T-cell (primary cell): ENCODE measurements at regions of chr14 and their contacts with region 1.

Region 1: DNA sequence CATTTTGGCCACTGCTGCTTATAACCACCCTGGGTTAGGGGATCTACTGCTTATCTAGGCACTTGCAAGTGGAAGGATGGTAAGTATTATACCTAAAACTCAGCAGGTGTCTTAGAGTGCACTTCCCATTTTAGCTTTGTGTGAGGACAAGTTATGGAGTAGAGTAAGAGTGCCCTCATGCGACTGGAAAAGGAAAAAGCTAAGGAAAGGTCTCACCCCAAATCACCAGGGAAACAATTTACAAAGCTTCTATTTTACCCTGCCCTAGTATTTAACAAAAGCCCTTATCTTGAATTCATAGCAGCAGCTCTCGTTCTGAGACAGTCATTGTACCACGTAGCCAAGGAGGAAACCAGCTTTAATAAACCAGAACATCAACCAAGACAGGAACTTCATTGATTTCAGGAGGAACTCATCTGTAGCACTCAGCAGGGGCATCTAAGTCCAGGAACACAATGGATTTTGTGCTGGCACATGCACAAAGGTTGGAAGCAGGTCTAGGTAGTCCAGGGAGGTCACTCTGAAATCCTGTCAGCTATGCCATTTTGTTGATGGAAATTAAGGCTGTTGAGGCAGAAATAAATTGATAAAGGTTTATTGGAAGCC is 2.9 kb downstream of the RDH12 start:
- DNase-seq: peak in 19 of 35 experiments; percentile 4 to 79 (median 15)
- ATAC-seq: peak; percentile 67 to 82 (median 80)
- H3K4me3 ChIP-seq: no peak overlapping the region
- H3K4me3 Mint-ChIP-seq: no peak overlapping the region
- H3K27ac ChIP-seq: no peak overlapping the region
- H3K27ac Mint-ChIP-seq: no peak overlapping the region
- H3K4me1 ChIP-seq: no peaks in the 10 kb centered on the region
- H3K4me1 Mint-ChIP-seq: no peaks in the 10 kb centered on the region
- H3K27me3 ChIP-seq: no peaks in the 10 kb centered on the region
- H3K27me3 Mint-ChIP-seq: peaks cover 5% of the 10 kb centered on the region in 2 donors

Region 2: GRCh38 chr14:67426983-67427606 is 277.5 kb before region 1 on chr14:
- CTCF ChIA-PET with region 1: interaction called, 11 to 25 read pairs
- POLR2A ChIA-PET with region 1: interaction called in 1 of 2 experiments, 3 read pairs
- DNase-seq: peak; percentile 53 to 86 (median 69)
- ATAC-seq: peak; percentile 86 to 91 (median 88)
- H3K4me3 ChIP-seq: no peak overlapping the region
- H3K4me3 Mint-ChIP-seq: no peak overlapping the region
- H3K27ac ChIP-seq: no peak overlapping the region
- H3K27ac Mint-ChIP-seq: no peak overlapping the region
- H3K4me1 ChIP-seq: peaks cover 0 to 8% of the 10 kb centered on the region in 2 experiments
- H3K4me1 Mint-ChIP-seq: peaks cover 0 to 1% (median 0%) of the 10 kb centered on the region in 3 donors
- H3K27me3 ChIP-seq: peaks cover 0 to 41% of the 10 kb centered on the region in 2 experiments
- H3K27me3 Mint-ChIP-seq: peaks cover 11 to 18% of the 10 kb centered on the region in 2 donors

Region 3: GRCh38 chr14:67583711-67584644 is 120.6 kb before region 1 on chr14:
- CTCF ChIA-PET with region 1: interaction called, 11 to 29 read pairs
- POLR2A ChIA-PET with region 1: no interaction called
- DNase-seq: peak in 11 of 35 experiments; percentile 10 to 63 (median 19)
- ATAC-seq: peak; percentile 52 to 73 (median 64)
- H3K4me3 ChIP-seq: no peak overlapping the region
- H3K4me3 Mint-ChIP-seq: no peak overlapping the region
- H3K27ac ChIP-seq: no peak overlapping the region
- H3K27ac Mint-ChIP-seq: no peak overlapping the region
- H3K4me1 ChIP-seq: no peaks in the 10 kb centered on the region
- H3K4me1 Mint-ChIP-seq: no peaks in the 10 kb centered on the region
- H3K27me3 ChIP-seq: no peaks in the 10 kb centered on the region
- H3K27me3 Mint-ChIP-seq: no peaks in the 10 kb centered on the region

Region 4: DNA sequence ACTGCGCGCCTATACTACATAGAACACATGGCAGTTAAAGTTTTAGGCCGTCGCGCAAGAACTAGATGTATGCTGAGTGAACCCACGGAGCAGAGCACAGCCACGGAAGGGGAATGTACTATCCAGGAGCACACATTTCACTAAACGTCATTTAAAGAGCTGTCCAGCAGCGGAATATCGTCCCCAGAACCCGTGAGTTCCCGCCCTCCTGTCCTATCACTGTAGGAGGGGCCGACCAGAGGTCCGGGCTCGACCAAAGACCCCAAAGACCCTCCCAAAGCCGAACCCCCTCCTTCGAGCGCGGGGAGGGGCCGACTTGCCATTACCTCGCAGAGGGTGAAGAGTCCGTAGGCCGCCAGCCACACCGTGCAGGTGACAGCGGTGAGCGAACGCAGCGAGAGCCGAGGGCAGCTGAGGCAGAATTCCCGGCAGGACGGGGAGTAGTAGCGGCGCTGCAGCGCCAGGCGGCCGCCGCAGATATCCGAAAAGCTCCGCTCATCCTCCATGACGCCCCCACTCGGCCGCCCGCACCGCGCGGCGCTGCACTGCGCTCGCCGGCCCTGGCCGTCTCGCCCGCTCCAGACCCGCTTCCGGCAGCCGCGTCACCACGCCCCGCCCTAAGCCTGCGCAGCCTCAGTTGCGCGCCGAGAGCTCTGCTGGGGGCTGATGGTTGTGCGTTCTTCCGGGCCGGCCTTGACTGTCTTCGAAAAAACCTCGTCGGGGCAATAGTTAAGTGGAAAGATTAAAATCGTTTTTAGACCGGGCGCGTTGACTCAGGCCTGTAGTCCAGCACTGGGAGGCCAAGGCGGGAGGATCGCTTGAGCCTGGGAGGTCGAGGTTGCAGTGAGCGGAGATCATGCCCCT is 104.7 kb before region 1 on chr14 and contains the start of gene PIGH:
- CTCF ChIA-PET with region 1: interaction called, 4 to 14 read pairs
- POLR2A ChIA-PET with region 1: interaction called in 1 of 2 experiments, 3 read pairs
- DNase-seq: peak; percentile 84 to 97 (median 92)
- ATAC-seq: peak; percentile 97
- H3K4me3 ChIP-seq: peak within 1 kb of the TSS; percentile 88 to 90
- H3K4me3 Mint-ChIP-seq: peak within 1 kb of the TSS; percentile 87 to 98 (median 98)
- H3K27ac ChIP-seq: peak within 1 kb of the TSS; percentile 87
- H3K27ac Mint-ChIP-seq: peak within 1 kb of the TSS; percentile 94 to 95
- H3K4me1 ChIP-seq: peaks cover 11 to 14% of the 10 kb centered on the region in 2 experiments
- H3K4me1 Mint-ChIP-seq: peaks cover 37 to 52% (median 48%) of the 10 kb centered on the region in 3 donors
- H3K27me3 ChIP-seq: no peaks in the 10 kb centered on the region
- H3K27me3 Mint-ChIP-seq: no peaks in the 10 kb centered on the region
- total RNA-seq, gene PIGH: 28.7 to 46.8 (median 35.1) TPM

Region 5: GRCh38 chr14:67619446-67620216 is 85.0 kb before region 1 on chr14 and contains the start of gene ARG2:
- CTCF ChIA-PET with region 1: interaction called, 6 to 44 read pairs
- POLR2A ChIA-PET with region 1: interaction called, 3 read pairs
- DNase-seq: peak; percentile 88 to 99 (median 96)
- ATAC-seq: peak; percentile 91 to 98 (median 98)
- H3K4me3 ChIP-seq: peak within 1 kb of the TSS; percentile 79 to 92
- H3K4me3 Mint-ChIP-seq: peak within 1 kb of the TSS; percentile 83 to 89 (median 85)
- H3K27ac ChIP-seq: peak within 1 kb of the TSS; percentile 92
- H3K27ac Mint-ChIP-seq: peak within 1 kb of the TSS; percentile 80 to 87
- H3K4me1 ChIP-seq: peaks cover 19 to 27% of the 10 kb centered on the region in 2 experiments
- H3K4me1 Mint-ChIP-seq: peaks cover 35 to 38% (median 36%) of the 10 kb centered on the region in 3 donors
- H3K27me3 ChIP-seq: peaks cover 2 to 11% of the 10 kb centered on the region in 2 experiments
- H3K27me3 Mint-ChIP-seq: peaks cover 0 to 2% of the 10 kb centered on the region in 2 donors
- total RNA-seq, gene ARG2: 0.62 to 2.6 (median 1.1) TPM